ENCODE measurements at regions of chr3 and their contacts with region 1.

Region 1: DNA sequence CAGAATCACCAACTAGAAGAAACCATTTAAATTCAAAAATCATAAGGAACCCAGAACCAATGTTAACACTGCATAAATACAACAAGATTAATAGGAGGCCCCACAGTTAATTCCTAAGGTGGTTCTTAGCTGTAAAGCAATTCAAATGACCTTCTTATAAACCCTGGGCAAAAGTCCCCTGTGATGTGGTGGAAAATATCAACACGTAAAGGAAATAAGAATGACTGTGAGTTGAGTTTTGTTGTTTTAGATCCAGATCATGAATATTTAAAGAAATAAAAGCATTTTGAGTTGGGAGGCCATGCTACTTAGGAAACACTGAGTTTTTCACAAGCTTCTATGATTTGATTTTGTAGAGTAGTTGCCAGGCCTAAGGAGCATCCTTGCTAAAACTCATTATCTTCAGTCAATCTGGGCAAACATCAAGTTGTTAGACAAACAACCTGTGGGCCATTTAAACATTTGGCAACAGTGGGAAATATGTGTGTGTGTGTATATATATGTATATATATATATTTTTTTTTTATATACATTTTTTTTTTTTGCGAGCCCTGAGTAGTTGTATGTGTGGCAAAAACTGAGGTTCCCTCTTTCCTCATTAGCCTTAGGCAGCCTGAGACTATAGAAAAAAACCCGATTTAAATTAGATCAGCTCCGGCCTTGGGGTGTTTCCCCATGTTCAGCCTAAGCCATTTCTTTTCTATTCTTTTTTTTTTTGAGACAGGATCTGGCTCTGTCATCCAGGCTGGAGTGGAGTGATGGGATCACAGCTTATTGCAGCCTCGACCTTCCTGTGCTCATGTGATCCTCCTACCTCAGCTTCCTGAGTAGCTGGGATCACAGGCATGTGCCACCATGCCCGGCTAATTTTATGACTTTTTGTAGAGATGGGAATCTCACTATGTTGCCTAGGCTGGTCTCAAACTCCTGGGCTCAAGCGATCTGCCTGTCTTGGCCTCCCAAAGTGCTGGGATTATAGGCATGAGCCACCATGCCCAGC is 8.0 kb upstream of the PXK start:
- DNase-seq: no peak
- H3K4me3 ChIP-seq: no peak overlapping the region
- H3K27ac ChIP-seq: peak overlapping the region in 29 of 59 donors; percentile 1 to 65 (median 26)
- H3K27me3 ChIP-seq: no peaks in the 10 kb centered on the region
- CTCF ChIP-seq: no peak

Region 2: GRCh38 chr3:58433400-58434169 is 108.9 kb after region 1 on chr3 and contains the start of gene PDHB:
- intact Hi-C with region 1: loop called in 1 of 2 experiments (anchors 5 kb)
- DNase-seq: peak; percentile 86 to 95 (median 90)
- H3K4me3 ChIP-seq: peak within 1 kb of the TSS; percentile 51 to 97 (median 82)
- H3K27ac ChIP-seq: peak within 1 kb of the TSS; percentile 81 to 100 (median 97)
- H3K27me3 ChIP-seq: no peaks in the 10 kb centered on the region
- CTCF ChIP-seq: peak in 34 of 56 donors; percentile 1 to 53 (median 27)
- total RNA-seq, gene PDHB: 33.2 to 82.3 (median 62.6) TPM

Measured in dorsolateral prefrontal cortex (tissue), 120 donors.